Caki2 (cell line): ENCODE measurements at regions of chr2 and their contacts with region 1.

Region 1: GRCh38 chr2:33372940-33373553 is 103.4 kb upstream of the RASGRP3 start:
- DNase-seq: peak; percentile 28

Region 2: GRCh38 chr2:32772638-32773447 is 600.2 kb before region 1 on chr2:
- in situ Hi-C with region 1: loop called (anchors 10 kb)
- DNase-seq: peak; percentile 29

Region 3: GRCh38 chr2:33505966-33506365 is 132.9 kb after region 1 on chr2:
- in situ Hi-C with region 1: no loop called
- DNase-seq: no peak